ENCODE measurements at regions of chr11 and their contacts with region 1.

Region 1: DNA sequence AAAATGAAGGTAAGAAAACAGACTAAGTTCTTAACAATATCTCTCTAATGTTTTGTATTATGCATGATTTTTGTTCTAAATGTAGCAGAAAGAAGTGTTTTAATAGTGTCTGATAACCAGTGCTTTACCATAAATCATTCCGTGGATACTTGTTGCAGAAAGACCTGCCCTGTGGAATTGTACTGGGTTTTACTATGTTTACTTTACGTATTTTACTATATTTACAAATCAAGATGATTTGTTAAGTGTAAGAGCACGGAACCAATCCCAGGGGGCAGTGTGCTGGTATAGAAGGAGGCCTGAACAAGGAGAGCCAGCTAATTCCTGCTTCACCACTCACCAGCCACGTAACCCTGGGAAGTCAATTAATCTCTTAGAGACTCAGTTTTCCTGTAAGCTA is 1.4 kb downstream of the HTR3B start:
- DNase-seq: no peak
- ATAC-seq: peak in 2 of 4 donors; percentile 39 to 51
- H3K4me3 ChIP-seq: no peak overlapping the region
- H3K27ac ChIP-seq: no peak overlapping the region
- H3K4me1 ChIP-seq: no peaks in the 10 kb centered on the region
- H3K27me3 ChIP-seq: peaks cover 0 to 10% (median 0%) of the 10 kb centered on the region in 9 donors
- CTCF ChIP-seq: peak in 2 of 12 donors; percentile 9 to 27
- POLR2A ChIP-seq: no peak

Region 2: GRCh38 chr11:113730887-113731726 is 174.9 kb before region 1 on chr11:
- intact Hi-C with region 1: no loop called
- DNase-seq: peak in 2 of 5 donors; percentile 20 to 28
- ATAC-seq: peak in 3 of 4 donors; percentile 66 to 71 (median 69)
- H3K4me3 ChIP-seq: no peak overlapping the region
- H3K27ac ChIP-seq: no peak overlapping the region
- H3K4me1 ChIP-seq: no peaks in the 10 kb centered on the region
- H3K27me3 ChIP-seq: no peaks in the 10 kb centered on the region
- CTCF ChIP-seq: peak; percentile 28 to 72 (median 61)
- POLR2A ChIP-seq: no peak

Region 3: DNA sequence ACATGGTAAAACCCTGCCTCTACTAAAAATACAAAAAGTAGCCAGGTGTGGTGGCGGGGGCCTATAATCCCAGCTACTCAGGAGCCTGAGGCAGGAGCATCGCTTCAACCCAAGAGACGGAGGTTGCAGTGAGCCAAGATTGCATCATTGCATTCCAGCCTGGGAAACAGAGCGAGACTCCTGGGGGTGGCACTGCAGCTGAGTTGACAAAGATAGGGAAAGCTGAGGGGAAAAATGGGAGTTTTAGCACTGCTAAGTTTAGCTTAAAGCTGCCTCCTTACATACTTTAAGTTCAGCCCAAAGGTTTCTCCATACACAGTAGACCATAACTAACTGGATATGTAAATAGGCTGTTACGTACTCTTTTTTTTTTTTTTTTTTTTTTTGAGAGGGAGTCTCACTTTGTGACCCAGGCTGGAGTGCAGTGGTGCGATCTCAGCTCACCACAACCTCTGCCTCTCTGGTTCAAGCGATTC is 21.6 kb before region 1 on chr11:
- intact Hi-C with region 1: no loop called
- DNase-seq: no peak
- ATAC-seq: peak in 1 of 4 donors; percentile 50
- H3K4me3 ChIP-seq: no peak overlapping the region
- H3K27ac ChIP-seq: no peak overlapping the region
- H3K4me1 ChIP-seq: no peaks in the 10 kb centered on the region
- H3K27me3 ChIP-seq: no peaks in the 10 kb centered on the region
- CTCF ChIP-seq: no peak
- POLR2A ChIP-seq: no peak

Region 4: DNA sequence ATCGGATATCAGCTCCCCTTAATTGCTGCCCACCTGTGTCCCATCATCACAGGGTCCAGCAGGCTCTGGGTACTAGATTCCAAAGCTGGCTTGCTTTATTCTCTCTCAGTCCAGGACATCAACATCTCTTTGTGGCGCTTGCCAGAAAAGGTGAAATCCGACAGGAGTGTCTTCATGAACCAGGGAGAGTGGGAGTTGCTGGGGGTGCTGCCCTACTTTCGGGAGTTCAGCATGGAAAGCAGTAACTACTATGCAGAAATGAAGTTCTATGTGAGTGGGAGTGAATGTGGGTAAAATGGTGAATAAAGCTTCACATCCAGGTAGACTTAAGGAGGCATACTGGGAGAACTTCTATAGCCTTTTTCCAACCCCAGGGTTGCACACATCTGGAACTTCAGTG is 79.9 kb after region 1 on chr11:
- intact Hi-C with region 1: loop called in 2 of 10 experiments (anchors 2 to 10 kb)
- DNase-seq: no peak
- ATAC-seq: no peak
- H3K4me3 ChIP-seq: no peak overlapping the region
- H3K27ac ChIP-seq: no peak overlapping the region
- H3K4me1 ChIP-seq: no peaks in the 10 kb centered on the region
- H3K27me3 ChIP-seq: peaks cover 0 to 30% (median 4%) of the 10 kb centered on the region in 9 donors
- CTCF ChIP-seq: no peak
- POLR2A ChIP-seq: no peak

Region 5: GRCh38 chr11:113994077-113994954 is 88.3 kb after region 1 on chr11:
- intact Hi-C with region 1: loop called in 1 of 10 experiments (anchors 10 kb)
- DNase-seq: no peak
- ATAC-seq: peak in 1 of 4 donors; percentile 56
- H3K4me3 ChIP-seq: no peak overlapping the region
- H3K27ac ChIP-seq: no peak overlapping the region
- H3K4me1 ChIP-seq: no peaks in the 10 kb centered on the region
- H3K27me3 ChIP-seq: peaks cover 0 to 39% (median 8%) of the 10 kb centered on the region in 9 donors
- CTCF ChIP-seq: peak; percentile 52 to 74 (median 68)
- POLR2A ChIP-seq: no peak

Region 6: DNA sequence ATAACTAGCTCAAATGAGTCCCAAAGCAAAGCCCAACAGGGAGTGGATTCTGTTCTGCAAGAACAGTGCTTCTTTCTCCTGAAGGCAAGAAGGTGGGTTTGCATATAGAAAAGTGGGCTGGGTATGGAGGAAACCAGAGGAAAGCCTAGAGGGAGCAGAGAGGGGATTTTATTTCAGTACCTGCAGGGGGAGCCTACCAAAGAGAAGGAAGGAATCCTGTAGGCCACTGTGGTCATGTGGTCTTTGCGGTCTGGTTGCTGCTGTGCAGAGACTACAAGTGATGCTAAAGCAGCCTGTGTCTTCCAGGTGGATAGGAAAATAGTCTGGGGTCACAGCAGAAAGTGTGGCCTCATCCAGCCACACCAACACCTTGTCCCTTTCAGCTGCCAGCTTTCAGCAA is 120.3 kb after region 1 on chr11:
- intact Hi-C with region 1: loop called in 2 of 10 experiments (anchors 10 kb)
- DNase-seq: no peak
- ATAC-seq: no peak
- H3K4me3 ChIP-seq: no peak overlapping the region
- H3K27ac ChIP-seq: peak overlapping the region in 1 of 12 donors; percentile 63
- H3K4me1 ChIP-seq: peaks cover 0 to 12% (median 0%) of the 10 kb centered on the region in 12 donors
- H3K27me3 ChIP-seq: peaks cover 0 to 3% (median 0%) of the 10 kb centered on the region in 9 donors
- CTCF ChIP-seq: peak in 1 of 12 donors; percentile 4
- POLR2A ChIP-seq: no peak